ENCODE measurements at regions of chr2 and their contacts with region 1.

Region 1: DNA sequence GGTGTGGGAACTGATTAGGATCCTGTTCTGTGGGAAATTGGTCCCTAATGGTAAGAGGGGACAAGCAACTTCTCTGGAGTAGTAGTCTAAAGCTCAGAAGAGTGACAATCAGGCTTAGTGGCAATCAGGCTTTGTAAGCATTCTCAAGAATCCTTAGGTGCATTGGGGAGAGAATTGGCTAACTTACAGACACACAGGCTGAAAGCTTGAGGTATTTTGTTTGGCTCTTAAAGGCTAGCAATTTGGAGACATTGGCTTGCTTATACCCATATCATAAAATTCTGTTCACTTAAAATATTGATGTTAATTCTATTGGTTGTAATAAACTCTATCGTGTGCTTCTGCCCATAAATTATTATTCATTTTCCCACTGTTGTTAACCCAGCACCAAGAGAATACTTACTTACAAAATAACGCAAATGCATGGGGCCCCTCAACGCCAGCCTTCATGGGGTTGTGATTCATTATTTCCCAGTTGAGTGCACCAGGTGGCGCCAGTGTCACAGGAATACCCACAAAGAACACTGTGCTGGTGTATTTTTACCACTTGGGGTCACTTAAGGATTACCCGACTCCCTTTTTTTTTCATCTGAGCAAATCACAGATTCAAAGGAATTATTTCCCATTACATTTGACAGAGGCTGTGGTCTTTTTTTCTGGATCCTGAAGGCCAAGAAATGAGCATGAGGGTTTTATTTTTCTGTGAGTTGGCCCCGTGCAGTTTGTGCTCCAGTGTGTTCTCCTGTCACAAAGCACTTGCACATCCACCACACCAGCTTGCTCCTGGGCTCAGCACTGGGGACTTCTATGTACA is 45.5 kb downstream of the DDX1 start:
- DNase-seq: no peak
- H3K4me3 ChIP-seq: no peak overlapping the region
- H3K27ac ChIP-seq: peak overlapping the region in 1 of 4 donors; percentile 5
- H3K4me1 ChIP-seq: peaks cover 32 to 48% (median 39%) of the 10 kb centered on the region in 4 donors
- H3K27me3 ChIP-seq: no peaks in the 10 kb centered on the region
- CTCF ChIP-seq: peak; percentile 77 to 89 (median 86)
- EP300 ChIP-seq: no peak
- POLR2A ChIP-seq: no peak

Region 2: GRCh38 chr2:16281451-16282336 is 644.5 kb after region 1 on chr2:
- intact Hi-C with region 1: loop called (anchors 5 kb)
- DNase-seq: peak; percentile 24
- H3K4me3 ChIP-seq: no peak overlapping the region
- H3K27ac ChIP-seq: no peak overlapping the region
- H3K4me1 ChIP-seq: no peaks in the 10 kb centered on the region
- H3K27me3 ChIP-seq: no peaks in the 10 kb centered on the region
- CTCF ChIP-seq: peak; percentile 28 to 47 (median 32)
- EP300 ChIP-seq: no peak
- POLR2A ChIP-seq: no peak

Region 3: GRCh38 chr2:16507655-16508489 is 870.7 kb after region 1 on chr2:
- intact Hi-C with region 1: loop called (anchors 2 kb)
- DNase-seq: no peak
- H3K4me3 ChIP-seq: peak overlapping the region; percentile 47 to 59 (median 47)
- H3K27ac ChIP-seq: no peak overlapping the region
- H3K4me1 ChIP-seq: peaks cover 3 to 12% (median 11%) of the 10 kb centered on the region in 4 donors
- H3K27me3 ChIP-seq: peaks cover 0 to 30% (median 13%) of the 10 kb centered on the region in 4 donors
- CTCF ChIP-seq: peak; percentile 54 to 74 (median 58)
- EP300 ChIP-seq: no peak
- POLR2A ChIP-seq: no peak

Region 4: GRCh38 chr2:16608661-16609643 is 971.8 kb after region 1 on chr2:
- intact Hi-C with region 1: loop called (anchors 2 kb)
- DNase-seq: peak; percentile 97
- H3K4me3 ChIP-seq: peak overlapping the region; percentile 41 to 52 (median 48)
- H3K27ac ChIP-seq: peak overlapping the region in 1 of 4 donors; percentile 15
- H3K4me1 ChIP-seq: peaks cover 7 to 25% (median 17%) of the 10 kb centered on the region in 4 donors
- H3K27me3 ChIP-seq: no peaks in the 10 kb centered on the region
- CTCF ChIP-seq: peak; percentile 84 to 94 (median 92)
- EP300 ChIP-seq: no peak
- POLR2A ChIP-seq: no peak

Measured in esophagus muscularis mucosa (tissue), 4 donors.